Right ventricle myocardium superior (tissue), 1 donor: ENCODE measurements at regions of chr4 and their contacts with region 1.

Region 1: GRCh38 chr4:128565565-128566186 is 243.8 kb upstream of the JADE1 start:
- DNase-seq: peak; percentile 64
- ATAC-seq: peak; percentile 79

Region 2: GRCh38 chr4:128371001-128371777 is 194.5 kb before region 1 on chr4:
- intact Hi-C with region 1: no loop called
- DNase-seq: no peak
- ATAC-seq: peak; percentile 68

Region 3: DNA sequence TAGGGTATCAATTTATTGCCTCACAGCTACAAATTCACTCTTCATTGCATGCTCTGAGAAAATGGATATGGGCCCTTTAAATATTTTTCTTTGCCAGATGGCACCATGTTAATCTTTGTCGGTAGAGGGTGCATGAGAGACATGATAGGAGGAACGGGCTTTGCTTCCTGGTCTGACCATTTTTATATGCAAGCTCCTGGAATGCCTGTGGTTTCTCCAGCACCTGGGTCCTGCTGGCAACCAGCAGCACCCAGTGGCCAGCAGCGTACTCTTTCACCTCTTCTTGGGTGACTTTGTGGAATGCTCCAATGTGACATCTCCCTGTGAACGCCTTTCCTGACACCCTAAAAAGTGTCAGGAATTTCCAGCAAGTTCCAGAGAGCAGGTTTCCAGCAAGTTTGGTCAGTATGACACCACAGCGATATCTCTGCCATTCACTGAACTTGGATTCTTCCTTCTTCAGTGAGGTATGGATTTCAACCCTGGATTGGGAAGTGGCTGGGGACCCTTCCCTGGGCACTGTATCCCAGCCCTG is 137.8 kb before region 1 on chr4:
- intact Hi-C with region 1: no loop called
- DNase-seq: no peak
- ATAC-seq: peak; percentile 80

Region 4: DNA sequence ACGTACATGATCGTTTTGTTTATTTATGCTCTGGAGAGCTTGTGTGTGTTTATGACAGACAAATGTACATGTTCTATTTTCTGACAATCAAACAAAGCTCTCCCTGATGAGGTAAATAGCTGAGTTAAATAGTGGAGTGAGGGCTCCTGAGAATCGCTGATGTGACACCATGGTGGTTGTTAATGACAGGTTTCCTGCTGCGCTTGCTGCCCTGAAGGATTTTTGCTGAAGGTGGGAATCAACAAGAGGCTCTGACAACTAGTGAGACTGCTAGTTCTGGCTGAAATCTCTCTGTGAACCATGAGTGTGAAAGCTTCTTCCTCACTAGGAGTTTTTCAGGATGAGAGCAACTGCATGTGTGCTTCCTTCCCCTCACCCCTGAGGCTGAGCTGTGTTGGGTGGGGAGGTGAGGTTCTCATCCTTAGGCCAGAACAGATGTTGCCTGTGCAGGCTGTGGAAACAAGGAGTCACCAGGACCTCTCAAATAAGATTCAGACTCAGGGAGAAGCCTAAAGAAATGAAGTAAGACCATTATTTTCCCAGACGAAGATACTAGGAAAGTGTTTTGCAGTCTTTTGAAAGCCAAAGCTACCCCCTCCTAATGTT is 70.4 kb after region 1 on chr4:
- intact Hi-C with region 1: no loop called
- DNase-seq: no peak
- ATAC-seq: peak; percentile 38

Region 5: GRCh38 chr4:128663336-128663735 is 97.7 kb after region 1 on chr4:
- intact Hi-C with region 1: no loop called
- DNase-seq: no peak
- ATAC-seq: no peak

Region 6: GRCh38 chr4:128675083-128675482 is 109.4 kb after region 1 on chr4:
- intact Hi-C with region 1: loop called (anchors 10 kb)
- DNase-seq: no peak
- ATAC-seq: peak; percentile 85